ENCODE measurements at regions of chr22 and their contacts with region 1.

Region 1: DNA sequence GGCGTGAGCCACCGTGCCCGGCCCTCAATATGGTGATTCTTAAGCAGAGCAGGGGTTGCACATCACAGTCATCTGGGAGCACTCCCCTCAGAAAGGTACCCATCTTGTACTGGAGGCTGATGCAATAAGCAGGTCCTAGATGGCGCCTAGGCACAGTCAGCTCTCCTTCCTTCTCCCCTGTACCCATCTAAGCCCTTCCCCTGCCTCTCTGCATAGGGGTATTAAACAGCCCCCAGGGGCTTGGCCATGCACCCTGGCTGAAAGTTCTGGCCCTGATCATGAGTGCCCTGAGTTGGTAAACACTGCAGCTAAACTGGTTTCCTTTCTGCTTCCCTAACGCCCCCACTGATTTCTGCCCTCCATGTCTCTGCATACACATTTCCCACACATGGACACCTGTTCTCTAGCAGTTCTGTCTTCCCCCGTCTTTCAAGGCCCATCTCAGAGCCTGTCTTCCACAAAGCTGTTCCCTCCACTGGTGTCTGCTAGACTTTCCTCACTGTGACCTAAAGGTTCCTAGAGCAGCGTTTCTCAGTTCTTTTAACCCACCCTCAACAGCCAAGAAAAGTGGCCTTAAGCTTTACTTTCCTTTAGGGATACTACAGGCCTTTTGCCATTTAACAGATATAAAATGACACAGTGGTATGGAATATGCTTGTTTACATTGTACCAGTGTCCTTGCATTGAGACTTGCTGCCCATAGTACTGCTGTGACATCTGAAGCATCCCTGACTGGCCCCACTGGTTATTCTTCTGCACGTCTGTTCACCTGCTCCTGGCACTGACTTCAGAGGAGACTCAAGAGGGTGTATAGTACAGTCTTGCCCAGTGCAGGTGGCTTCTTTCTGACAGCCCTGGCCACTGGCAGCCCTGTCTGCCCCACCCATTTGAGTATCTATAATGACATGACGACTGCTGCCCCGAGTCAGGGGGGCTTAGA is 15.6 kb downstream of the UBE2L3 start:
- DNase-seq: no peak

Region 2: DNA sequence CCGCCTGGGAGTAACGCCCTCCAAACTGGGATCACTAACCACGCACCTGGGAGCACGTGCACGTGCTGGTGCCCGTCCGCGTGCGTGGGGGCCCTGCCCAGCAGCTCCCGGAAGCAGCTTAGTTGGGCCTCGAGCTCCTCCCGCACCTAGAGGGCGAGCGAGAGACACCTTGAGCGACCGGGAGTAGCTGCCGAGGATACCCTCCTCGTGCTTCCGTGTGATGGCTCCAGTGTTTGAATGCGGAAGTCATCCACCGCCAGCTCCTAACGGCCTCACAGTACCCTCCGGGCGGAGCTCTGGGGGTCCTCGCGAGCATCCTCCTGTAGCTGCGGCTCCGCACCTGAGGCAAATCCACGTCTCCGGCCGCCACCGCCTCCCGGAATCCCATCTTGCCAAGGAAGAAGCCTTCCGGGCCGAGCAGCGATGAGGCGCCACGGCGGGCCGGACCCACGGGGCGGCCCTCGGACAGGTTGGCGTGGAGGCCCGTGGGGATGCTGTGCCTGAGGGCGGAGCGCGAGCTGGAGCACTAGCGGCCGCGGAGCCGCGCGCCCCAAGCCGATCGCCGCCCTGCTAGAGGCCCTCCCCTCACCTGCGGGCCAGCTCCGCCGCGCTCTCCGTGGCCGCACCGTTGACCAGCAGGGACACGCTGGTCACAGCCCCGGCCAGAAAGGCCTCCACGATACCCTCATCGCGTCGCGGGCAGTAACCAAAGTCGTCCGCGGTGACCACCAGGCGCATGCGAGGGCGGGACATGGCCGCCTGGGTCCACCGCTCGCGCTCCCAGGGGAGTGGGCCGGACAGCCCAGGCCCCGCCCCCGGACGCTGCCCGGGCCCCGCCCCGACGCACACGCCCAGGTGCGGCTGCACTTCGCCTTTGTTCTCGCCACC is 46.4 kb after region 1 on chr22 and contains the start of gene YDJC:
- intact Hi-C with region 1: loop called (anchors 5 kb)
- DNase-seq: peak; percentile 66 to 97 (median 94)

Region 3: DNA sequence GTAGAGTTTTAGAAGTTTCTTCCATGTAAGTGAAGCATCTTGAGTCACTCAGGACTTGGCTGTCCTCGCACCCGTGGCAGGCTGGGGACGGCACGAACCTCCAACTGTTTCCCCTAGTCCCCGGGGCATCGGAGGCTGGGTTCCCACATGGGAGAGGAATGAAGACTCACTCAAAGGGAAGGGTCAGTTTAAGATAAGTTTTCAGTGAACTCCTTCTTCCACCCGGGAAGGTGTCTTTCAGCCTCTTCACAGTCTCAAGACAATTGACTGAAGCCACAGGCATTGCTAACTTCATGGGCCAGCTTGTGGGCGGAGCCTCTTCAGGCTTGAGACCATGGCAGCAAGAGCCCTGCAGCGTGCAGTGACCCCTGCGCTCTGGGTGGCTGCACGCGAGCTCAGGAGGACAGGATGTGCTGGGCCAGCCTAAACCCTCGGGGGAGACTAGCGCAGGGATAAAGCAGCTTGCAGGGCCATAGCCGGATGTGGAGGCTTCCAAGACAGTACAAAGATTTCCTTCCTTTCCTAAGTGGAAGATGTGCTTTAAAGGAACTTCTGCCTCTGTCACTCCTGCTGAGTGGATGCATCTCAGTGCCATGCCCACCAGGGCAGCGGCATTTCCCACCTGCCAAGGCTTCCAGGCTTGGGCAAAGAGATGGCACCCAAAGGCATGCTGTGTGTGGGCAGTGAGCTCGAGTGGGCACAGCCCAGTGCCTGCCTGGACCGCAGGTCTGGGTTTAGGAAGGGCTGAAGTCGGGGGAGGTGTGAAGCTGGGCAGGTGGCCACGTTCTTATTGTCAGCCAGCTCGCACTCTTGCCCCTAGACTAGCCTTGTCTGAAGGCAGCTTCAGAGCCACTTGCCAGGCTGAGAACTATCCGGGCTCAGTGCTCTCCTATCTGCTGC is 115.6 kb after region 1 on chr22:
- intact Hi-C with region 1: no loop called
- DNase-seq: no peak